K562 (cell line): ENCODE measurements at regions of chr1 and their contacts with region 1.

Region 1: DNA sequence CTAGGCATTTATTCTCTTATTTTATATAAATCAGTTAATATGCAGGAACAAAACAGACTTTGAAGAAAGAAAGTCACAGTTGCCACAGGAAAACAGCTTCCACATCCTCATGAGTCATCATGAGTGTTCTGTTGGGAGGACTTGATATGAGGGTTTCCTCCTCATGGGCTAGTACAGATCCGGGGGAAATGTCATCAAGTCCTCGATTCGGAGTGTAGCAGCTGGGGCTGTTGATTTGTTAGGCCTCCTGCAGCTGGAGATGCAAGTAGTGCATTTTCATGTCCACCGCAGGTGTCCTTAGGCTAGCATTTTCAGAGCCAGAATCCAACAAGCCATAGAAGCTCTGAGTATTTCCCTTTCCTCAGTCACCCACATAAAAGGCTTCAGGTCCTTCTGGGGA is 36.7 kb downstream of the ADAM30 start:
- DNase-seq: peak; percentile 50 to 87 (median 69)
- ATAC-seq: peak; percentile 96
- H3K4me3 ChIP-seq: no peak overlapping the region
- H3K27ac ChIP-seq: peak overlapping the region; percentile 82
- H3K4me1 ChIP-seq: peaks cover 0 to 26% of the 10 kb centered on the region in 2 experiments; a peak in 4 of 5 replicates
- H3K27me3 ChIP-seq: no peaks in the 10 kb centered on the region
- CTCF ChIP-seq: no peak
- EP300 ChIP-seq: peak; percentile 84
- POLR2A ChIP-seq: no peak
- RAD21 ChIP-seq: 0 out of 4 replicates have a peak, but pooled peaks of 1 of the 2 experiments have one; percentile 1

Region 2: GRCh38 chr1:119795261-119796200 is 64.1 kb before region 1 on chr1:
- CTCF ChIA-PET with region 1: no interaction called
- POLR2A ChIA-PET with region 1: no interaction called
- in situ Hi-C with region 1: no loop called
- intact Hi-C with region 1: no loop called
- DNase-seq: no peak
- ATAC-seq: no peak
- H3K4me3 ChIP-seq: no peak overlapping the region
- H3K27ac ChIP-seq: no peak overlapping the region
- H3K4me1 ChIP-seq: no peaks in the 10 kb centered on the region
- H3K27me3 ChIP-seq: peaks cover 41 to 52% of the 10 kb centered on the region in 2 experiments
- CTCF ChIP-seq: no peak
- EP300 ChIP-seq: no peak
- POLR2A ChIP-seq: no peak
- RAD21 ChIP-seq: no peak

Region 3: DNA sequence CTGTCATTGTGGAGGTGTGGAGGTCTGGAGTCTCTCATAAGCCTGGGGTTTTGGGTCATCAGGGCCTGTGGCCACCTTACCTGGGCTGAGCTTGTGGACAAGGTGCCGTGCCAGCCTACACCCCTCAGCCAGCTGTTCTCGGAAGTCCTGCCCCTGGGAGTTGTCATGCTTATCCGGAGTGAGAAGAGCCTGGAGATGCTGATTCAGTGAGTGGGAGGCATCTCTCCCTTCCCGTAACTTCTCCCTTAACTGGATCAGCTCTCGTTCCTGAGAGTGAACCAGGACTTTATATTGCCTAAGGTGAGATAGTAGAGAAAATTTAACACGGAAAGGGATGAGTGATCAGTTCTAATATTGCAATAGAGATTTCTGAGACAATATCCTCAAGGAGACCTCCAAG is 18.3 kb before region 1 on chr1:
- CTCF ChIA-PET with region 1: no interaction called
- POLR2A ChIA-PET with region 1: interaction called, 3 read pairs
- in situ Hi-C with region 1: no loop called
- intact Hi-C with region 1: loop called (anchors 2 kb)
- DNase-seq: no peak
- ATAC-seq: no peak
- H3K4me3 ChIP-seq: no peak overlapping the region
- H3K27ac ChIP-seq: no peak overlapping the region
- H3K4me1 ChIP-seq: peaks cover 0 to 11% of the 10 kb centered on the region in 2 experiments; a peak in 3 of 5 replicates
- H3K27me3 ChIP-seq: 0 out of 5 replicates have a peak, but pooled peaks cover 0 to 3% of the 10 kb centered on the region in 2 experiments
- CTCF ChIP-seq: no peak
- EP300 ChIP-seq: no peak
- POLR2A ChIP-seq: no peak
- RAD21 ChIP-seq: no peak

Region 4: DNA sequence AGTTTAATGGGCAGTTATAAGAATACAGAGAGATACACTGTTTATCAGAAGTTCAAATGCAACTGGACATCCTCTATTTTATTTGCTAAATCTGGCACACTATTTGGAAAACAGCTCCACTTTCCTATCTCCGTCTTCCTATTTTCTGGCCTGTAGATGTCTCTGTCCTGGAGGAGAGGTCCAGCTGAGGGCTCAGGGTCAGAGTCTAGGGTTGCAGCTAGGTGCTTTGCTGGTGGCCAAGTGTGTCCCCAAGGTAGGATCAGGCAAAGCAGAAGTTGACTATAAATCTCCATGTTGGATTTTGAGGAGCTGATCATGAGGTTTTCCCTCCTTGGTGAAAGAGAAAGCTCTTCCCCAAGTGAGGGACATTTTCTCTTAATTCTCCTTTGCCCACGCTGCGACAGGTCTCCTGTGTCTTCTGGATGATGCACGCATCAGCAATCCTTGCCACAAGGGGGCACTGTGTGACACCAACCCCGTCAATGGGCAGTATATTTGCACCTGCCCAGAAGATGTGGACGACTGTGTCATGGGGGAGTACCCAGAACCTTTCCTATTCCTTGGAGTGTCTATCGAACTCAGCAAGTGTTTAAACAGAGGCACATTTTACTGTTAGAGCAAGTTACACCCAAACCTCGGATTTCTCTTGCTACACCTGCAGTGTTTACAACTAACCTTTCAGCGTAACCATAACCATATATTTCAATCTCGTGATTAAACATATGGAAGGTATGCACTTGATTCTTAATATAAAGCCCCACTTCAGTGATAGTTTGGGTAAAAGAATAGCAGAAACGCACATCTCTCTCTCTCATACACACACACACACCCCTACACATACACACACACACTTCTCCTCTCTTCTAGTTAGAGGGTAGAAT is 26.5 kb after region 1 on chr1:
- CTCF ChIA-PET with region 1: no interaction called
- POLR2A ChIA-PET with region 1: no interaction called
- in situ Hi-C with region 1: no loop called
- intact Hi-C with region 1: no loop called
- DNase-seq: peak; percentile 64 to 74 (median 72)
- ATAC-seq: peak; percentile 98
- H3K4me3 ChIP-seq: no peak overlapping the region
- H3K27ac ChIP-seq: no peak overlapping the region
- H3K4me1 ChIP-seq: peaks cover 0 to 4% of the 10 kb centered on the region in 2 experiments; a peak in 2 of 5 replicates
- H3K27me3 ChIP-seq: no peaks in the 10 kb centered on the region; a peak in 1 of 5 replicates
- CTCF ChIP-seq: peak; percentile 75 to 87 (median 78)
- EP300 ChIP-seq: no peak
- POLR2A ChIP-seq: no peak
- RAD21 ChIP-seq: peak; percentile 19 to 69; a peak in 2 of 4 replicates